Ascending aorta (tissue), 2 donors: ENCODE measurements at regions of chr9 and their contacts with region 1.

Region 1: DNA sequence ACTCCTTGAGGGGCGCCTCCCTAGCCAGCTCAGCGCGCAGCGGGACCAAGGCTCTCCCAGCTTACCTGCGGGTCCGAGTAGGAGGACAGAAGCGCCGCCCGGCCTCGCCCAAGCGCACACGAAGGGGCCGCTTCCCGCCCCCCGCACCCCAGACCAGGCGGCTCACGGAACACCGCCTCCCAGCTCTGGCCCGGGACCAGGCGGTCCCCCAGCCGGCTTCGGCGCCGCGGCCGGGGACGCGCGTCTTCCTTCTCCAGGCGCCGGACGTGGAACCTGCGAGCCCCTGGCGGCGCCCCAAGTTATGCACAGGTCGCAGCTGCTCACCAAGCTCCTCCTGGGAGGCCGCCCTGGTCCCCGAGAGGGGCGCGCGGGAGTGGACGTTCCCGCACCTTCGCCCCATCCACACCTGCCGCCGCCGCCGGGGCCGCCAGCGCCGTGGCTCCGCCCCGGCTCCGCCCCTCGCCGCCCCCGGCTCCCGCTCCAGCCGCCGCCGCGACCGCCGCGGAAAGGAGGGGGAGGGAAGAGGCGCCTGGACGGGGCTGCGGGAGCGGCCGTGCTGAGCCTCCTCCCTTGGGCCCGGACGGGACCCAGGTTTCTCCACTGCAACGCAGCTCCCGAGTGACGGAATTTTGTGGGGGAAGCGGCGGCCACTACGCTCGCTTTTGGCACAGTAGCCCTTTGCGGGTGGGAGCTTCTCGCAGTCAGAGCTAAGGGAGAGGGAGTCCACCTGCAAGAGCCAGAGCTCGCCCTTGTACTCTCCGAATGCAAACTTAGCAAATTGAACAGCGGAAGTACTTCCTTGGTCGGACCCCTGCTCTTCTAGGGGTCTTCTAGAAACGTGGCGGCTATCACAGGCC is 77.5 kb upstream of the IFNE start:
- DNase-seq: no peak
- H3K4me3 ChIP-seq: peak overlapping the region; percentile 61 to 62
- H3K27ac ChIP-seq: no peak overlapping the region
- H3K4me1 ChIP-seq: peaks cover 5 to 6% of the 10 kb centered on the region in 2 donors
- H3K27me3 ChIP-seq: peaks cover 11% of the 10 kb centered on the region
- CTCF ChIP-seq: no peak

Region 2: DNA sequence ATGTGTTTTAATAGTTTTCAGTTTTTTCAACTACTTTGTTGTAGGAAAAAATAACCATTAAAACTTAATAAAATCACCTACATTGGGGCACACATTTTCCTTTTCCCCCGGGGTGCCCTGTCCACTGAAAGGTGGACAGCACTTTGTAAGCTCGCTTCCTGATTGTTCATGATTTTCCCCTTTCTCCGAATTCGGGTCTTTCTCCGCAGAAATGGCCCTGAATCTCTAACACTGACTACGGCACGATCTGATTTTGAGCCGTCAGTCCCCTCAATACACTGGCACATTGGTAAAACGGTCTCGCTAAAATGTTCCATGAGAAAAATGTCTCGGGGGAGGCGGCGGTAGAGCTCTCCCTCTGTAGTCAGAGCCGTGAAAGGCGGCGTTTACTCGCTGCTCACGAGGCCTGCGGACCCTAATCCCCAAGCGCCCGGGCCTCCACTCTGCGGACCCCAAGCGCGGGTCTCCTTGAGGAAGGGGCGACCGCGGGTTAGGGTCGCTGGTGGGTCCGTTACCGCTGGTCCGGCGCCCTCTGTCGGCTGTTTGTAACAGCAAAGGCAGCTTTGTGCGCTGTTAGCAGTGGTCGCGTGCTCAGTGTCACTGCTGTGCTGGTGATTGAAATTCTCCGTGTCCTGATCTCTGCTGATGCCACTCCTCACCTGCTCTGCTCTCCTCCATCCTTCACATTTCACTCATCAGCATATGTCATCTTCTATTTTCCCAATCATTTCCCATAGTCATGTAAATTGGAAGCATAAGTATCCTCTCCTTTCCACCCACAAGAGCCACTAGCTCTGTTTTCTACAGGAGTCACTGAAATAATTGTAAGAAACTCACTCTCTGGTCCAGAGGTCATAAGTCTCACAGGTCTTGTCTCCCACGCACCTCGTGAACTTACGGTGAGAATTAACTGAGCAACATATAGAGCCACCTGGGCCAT is 163.6 kb before region 1 on chr9:
- intact Hi-C with region 1: loop called (anchors 10 kb)
- DNase-seq: no peak
- H3K4me3 ChIP-seq: peak overlapping the region; percentile 50 to 63
- H3K27ac ChIP-seq: no peak overlapping the region
- H3K4me1 ChIP-seq: no peaks in the 10 kb centered on the region
- H3K27me3 ChIP-seq: no peaks in the 10 kb centered on the region
- CTCF ChIP-seq: peak; percentile 41 to 78 (median 64)

Region 3: GRCh38 chr9:21789541-21790037 is 229.9 kb after region 1 on chr9:
- intact Hi-C with region 1: loop called (anchors 10 kb)
- DNase-seq: peak in 1 of 2 donors; percentile 75
- H3K4me3 ChIP-seq: peak overlapping the region in 1 of 2 donors; percentile 49
- H3K27ac ChIP-seq: no peak overlapping the region
- H3K4me1 ChIP-seq: no peaks in the 10 kb centered on the region
- H3K27me3 ChIP-seq: no peaks in the 10 kb centered on the region
- CTCF ChIP-seq: peak; percentile 67 to 84 (median 80)

Region 4: GRCh38 chr9:21985964-21986667 is 426.5 kb after region 1 on chr9:
- intact Hi-C with region 1: loop called (anchors 10 kb)
- DNase-seq: no peak
- H3K4me3 ChIP-seq: no peak overlapping the region
- H3K27ac ChIP-seq: no peak overlapping the region
- H3K4me1 ChIP-seq: no peaks in the 10 kb centered on the region
- H3K27me3 ChIP-seq: no peaks in the 10 kb centered on the region
- CTCF ChIP-seq: no peak